Heart left ventricle (tissue), 16 donors: ENCODE measurements at regions of chr11 and their contacts with region 1.

Region 1: DNA sequence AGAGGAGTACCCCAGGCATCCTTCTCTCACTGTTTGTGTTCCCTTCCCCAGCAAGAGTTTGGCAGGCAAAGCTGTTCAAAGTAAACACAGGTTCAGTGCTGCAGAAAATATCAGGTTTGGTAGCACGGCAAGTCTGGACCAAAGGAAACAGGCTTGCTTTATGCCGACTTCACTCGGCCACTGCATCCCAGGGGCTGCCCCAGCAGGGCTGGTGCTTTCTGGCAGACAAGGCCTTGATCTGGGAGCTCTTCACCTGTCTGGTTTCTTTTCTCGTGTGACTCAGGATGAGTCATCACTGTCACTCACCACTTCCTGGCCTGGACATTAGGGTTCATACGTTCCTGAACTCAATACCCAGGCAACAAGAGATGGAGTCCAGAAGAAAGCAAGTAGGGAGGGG is 52.6 kb upstream of the NAV2 start:
- DNase-seq: no peak
- ATAC-seq: no peak
- H3K4me3 ChIP-seq: no peak overlapping the region
- H3K27ac ChIP-seq: peak overlapping the region in 1 of 12 donors; percentile 63
- H3K4me1 ChIP-seq: peaks cover 0 to 10% (median 5%) of the 10 kb centered on the region in 12 donors
- H3K27me3 ChIP-seq: no peaks in the 10 kb centered on the region
- CTCF ChIP-seq: no peak
- POLR2A ChIP-seq: no peak

Region 2: GRCh38 chr11:19605520-19606371 is 54.3 kb before region 1 on chr11:
- intact Hi-C with region 1: loop called in 1 of 10 experiments (anchors 10 kb)
- DNase-seq: peak in 1 of 5 donors; percentile 25
- ATAC-seq: peak in 3 of 4 donors; percentile 65 to 85 (median 73)
- H3K4me3 ChIP-seq: no peak overlapping the region
- H3K27ac ChIP-seq: peak overlapping the region in 1 of 12 donors; percentile 39
- H3K4me1 ChIP-seq: peaks cover 0 to 28% (median 16%) of the 10 kb centered on the region in 12 donors
- H3K27me3 ChIP-seq: no peaks in the 10 kb centered on the region
- CTCF ChIP-seq: no peak
- POLR2A ChIP-seq: no peak